ENCODE measurements at regions of chr5 and their contacts with region 1.

Region 1: DNA sequence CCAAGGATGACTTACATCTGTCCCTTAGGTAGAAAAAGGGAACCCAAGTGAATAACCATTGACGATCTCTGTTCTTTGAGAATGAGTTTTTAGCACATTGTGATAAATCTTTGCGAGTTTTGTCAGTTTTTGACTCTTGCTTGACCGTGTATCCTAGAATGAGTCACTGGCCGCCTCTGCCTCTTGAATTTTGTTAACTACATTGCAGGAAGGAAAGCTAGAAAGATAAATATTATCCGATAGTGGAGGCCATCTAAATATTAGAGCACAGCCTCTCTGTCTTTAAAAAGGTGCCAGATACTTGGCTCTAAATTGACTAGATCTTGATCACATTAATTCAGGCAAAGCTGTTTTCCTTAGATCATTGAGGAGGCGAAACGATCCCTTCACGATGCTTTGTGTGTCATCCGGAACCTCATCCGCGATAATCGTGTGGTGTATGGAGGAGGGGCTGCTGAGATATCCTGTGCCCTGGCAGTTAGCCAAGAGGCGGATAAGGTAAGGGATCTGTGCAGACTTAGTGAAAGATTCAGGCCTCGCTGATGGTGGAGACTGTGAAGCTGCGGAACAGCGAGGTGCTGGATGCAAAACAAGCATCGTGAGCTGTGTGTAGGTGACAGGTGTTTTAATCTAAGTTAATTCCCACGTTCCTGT is 12.2 kb downstream of the CCT5 start:
- DNase-seq: no peak
- H3K4me3 ChIP-seq: no peak overlapping the region
- H3K27ac ChIP-seq: no peak overlapping the region
- H3K4me1 ChIP-seq: peaks cover 18% of the 10 kb centered on the region
- H3K27me3 ChIP-seq: no peaks in the 10 kb centered on the region
- CTCF ChIP-seq: no peak

Region 2: DNA sequence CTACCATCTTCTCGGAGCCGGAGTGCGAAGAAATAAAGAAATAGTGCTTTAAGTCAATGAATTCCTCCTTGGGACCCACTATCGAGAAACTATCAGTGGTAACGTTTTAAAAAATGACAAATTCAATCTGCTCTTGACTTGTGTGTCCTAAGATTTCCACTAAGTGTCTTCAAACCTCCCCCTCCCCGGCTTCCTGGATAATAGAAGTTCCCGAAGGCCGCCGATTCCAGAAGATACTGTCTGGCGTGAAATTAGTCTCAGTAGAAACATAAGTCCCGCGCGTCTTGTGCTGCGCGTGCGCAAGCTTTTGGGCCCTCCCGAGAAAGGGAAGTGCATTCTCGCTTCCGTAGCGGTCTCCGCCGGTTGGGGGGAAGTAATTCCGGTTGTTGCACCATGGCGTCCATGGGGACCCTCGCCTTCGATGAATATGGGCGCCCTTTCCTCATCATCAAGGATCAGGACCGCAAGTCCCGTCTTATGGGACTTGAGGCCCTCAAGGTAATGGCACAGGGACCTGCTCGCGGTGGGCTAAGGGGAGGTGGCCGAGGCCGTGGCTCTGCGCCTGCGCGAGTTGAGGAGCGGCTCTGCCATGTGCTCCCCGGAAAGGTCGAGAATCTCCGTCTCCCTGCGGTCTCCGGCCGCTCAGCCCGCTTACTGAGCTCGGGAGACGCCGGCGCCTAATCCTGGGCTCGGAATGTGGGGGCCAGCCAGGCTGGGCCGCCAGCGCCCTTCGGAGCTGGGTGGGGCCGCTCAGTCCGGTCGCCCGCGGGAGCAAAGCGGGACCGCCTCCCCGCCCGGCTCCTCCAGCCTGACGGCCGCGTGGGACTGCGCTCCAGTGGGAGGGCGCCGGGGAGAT is 12.1 kb before region 1 on chr5 and contains the start of gene CCT5:
- CTCF ChIA-PET with region 1: no interaction called
- POLR2A ChIA-PET with region 1: interaction called, 5 read pairs
- intact Hi-C with region 1: loop called (anchors 1 kb)
- DNase-seq: peak; percentile 97 to 98
- H3K4me3 ChIP-seq: peak within 1 kb of the TSS; percentile 100
- H3K27ac ChIP-seq: peak within 1 kb of the TSS; percentile 91
- H3K4me1 ChIP-seq: peaks cover 17% of the 10 kb centered on the region
- H3K27me3 ChIP-seq: no peaks in the 10 kb centered on the region
- CTCF ChIP-seq: no peak
- total RNA-seq, gene CCT5: 658 and 831 TPM in 2 replicates

Region 3: DNA sequence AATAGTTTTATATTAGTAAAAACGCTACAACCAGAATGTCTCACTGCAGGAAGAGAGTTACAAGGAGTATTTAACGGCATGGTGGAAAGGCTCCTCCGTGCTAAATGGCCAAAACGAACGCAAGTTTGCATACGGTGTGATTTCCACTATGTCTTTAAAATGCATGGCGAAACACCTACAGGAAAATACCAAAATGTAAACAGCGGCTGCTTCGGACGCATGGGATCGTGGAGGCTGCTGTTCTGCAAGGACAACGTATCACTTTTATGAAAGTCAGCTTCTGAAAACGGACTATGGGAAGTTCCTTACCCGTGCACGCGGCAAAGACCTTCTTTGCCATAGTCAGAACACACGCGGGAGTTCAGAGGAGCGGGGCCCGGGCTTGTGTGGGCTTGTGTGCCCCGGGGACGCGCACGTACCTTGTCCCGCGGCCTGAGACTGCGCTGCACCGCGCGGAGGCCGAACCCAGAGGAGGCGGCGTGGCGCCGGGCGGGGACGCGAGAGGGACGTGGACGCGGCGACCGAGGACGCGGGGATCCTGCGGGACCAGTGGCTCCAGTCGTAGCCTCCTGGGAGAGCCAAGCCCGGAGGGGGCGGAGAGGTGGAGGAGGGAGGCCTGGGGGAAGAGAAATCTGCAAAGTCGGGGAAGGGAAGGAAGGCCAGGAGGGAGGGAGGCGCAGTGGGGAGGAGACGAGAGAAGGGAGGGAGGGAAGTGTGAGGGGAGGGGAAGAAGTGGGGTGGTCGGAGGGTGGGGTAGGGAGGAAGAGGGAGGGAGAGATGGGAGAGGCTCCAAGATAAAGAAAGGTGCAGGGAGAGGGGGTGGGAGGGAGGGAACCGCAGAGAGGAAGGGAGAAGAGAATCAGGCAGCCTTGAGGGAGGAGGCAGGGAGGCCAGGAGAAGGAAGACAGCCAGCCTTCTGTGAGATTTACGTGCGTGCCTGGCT is 45.2 kb after region 1 on chr5 and contains the start of gene CMBL:
- CTCF ChIA-PET with region 1: no interaction called
- POLR2A ChIA-PET with region 1: no interaction called
- intact Hi-C with region 1: no loop called
- DNase-seq: peak; percentile 56 to 94
- H3K4me3 ChIP-seq: peak within 1 kb of the TSS; percentile 79
- H3K27ac ChIP-seq: peak within 1 kb of the TSS; percentile 79
- H3K4me1 ChIP-seq: peaks cover 44% of the 10 kb centered on the region
- H3K27me3 ChIP-seq: no peaks in the 10 kb centered on the region
- CTCF ChIP-seq: no peak
- total RNA-seq, gene CMBL: 286 and 294 TPM in 2 replicates

Region 4: GRCh38 chr5:10364186-10364683 is 102.0 kb after region 1 on chr5:
- CTCF ChIA-PET with region 1: interaction called, 4 read pairs
- POLR2A ChIA-PET with region 1: interaction called, 12 read pairs
- intact Hi-C with region 1: no loop called
- DNase-seq: peak in 1 of 2 experiments; percentile 23
- H3K4me3 ChIP-seq: no peak overlapping the region
- H3K27ac ChIP-seq: no peak overlapping the region
- H3K4me1 ChIP-seq: 0 out of 2 replicates have a peak, but pooled peaks cover 19% of the 10 kb centered on the region
- H3K27me3 ChIP-seq: no peaks in the 10 kb centered on the region
- CTCF ChIP-seq: peak; percentile 61

Region 5: GRCh38 chr5:10424124-10424731 is 162.0 kb after region 1 on chr5:
- CTCF ChIA-PET with region 1: no interaction called
- POLR2A ChIA-PET with region 1: interaction called, 11 read pairs
- intact Hi-C with region 1: loop called (anchors 5 kb)
- DNase-seq: no peak
- H3K4me3 ChIP-seq: no peak overlapping the region
- H3K27ac ChIP-seq: no peak overlapping the region
- H3K4me1 ChIP-seq: peaks cover 15% of the 10 kb centered on the region
- H3K27me3 ChIP-seq: no peaks in the 10 kb centered on the region
- CTCF ChIP-seq: peak; percentile 51

Measured in PC-9 (cell line).